ENCODE measurements at regions of chr7 and their contacts with region 1.

Region 1: GRCh38 chr7:138002096-138002827 is 376 bp upstream of the CREB3L2 start:
- DNase-seq: peak; percentile 95 to 98 (median 97)
- ATAC-seq: peak; percentile 95
- H3K4me3 ChIP-seq: peak overlapping the region; percentile 99
- H3K4me3 Mint-ChIP-seq: peak overlapping the region; percentile 89 to 96 (median 94)
- H3K27ac ChIP-seq: peak overlapping the region; percentile 79
- H3K27ac Mint-ChIP-seq: peak overlapping the region; percentile 67 to 95 (median 89)
- H3K4me1 ChIP-seq: peaks cover 6 to 14% of the 10 kb centered on the region in 2 donors
- H3K4me1 Mint-ChIP-seq: peaks cover 9 to 54% (median 45%) of the 10 kb centered on the region in 7 donors
- H3K27me3 ChIP-seq: no peaks in the 10 kb centered on the region
- H3K27me3 Mint-ChIP-seq: no peaks in the 10 kb centered on the region

Region 2: DNA sequence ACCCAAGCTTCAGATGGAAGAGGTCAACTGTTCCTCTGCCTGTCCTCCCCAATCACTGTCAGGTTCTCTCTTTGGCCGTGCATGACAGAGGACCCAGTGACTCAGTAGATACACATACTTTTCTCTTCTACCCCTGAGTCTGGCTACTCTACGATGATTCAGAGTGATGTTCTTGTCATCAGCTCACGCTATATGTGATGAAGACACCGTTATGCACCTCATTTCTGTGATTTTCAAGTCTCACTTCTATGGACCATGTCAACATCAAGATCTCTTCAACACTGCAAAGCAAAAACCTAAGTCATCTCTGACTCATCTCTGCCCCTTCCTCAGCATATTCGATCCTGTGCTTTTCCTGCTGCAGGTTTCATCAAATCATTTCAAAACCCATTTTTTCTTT is 78.9 kb before region 1 on chr7:
- CTCF ChIA-PET with region 1: interaction called, 4 read pairs
- POLR2A ChIA-PET with region 1: interaction called, 3 read pairs
- intact Hi-C with region 1: loop called in 1 of 2 experiments (anchors 5 kb)
- DNase-seq: no peak
- ATAC-seq: peak; percentile 18
- H3K4me3 ChIP-seq: no peak overlapping the region
- H3K4me3 Mint-ChIP-seq: no peak overlapping the region
- H3K27ac ChIP-seq: no peak overlapping the region
- H3K27ac Mint-ChIP-seq: peak overlapping the region in 1 of 9 donors; percentile 4
- H3K4me1 ChIP-seq: no peaks in the 10 kb centered on the region
- H3K4me1 Mint-ChIP-seq: peaks cover 13 to 35% (median 17%) of the 10 kb centered on the region in 7 donors
- H3K27me3 ChIP-seq: no peaks in the 10 kb centered on the region
- H3K27me3 Mint-ChIP-seq: no peaks in the 10 kb centered on the region

Region 3: GRCh38 chr7:137934941-137935883 is 67.0 kb before region 1 on chr7:
- CTCF ChIA-PET with region 1: interaction called, 13 read pairs
- POLR2A ChIA-PET with region 1: interaction called, 5 read pairs
- intact Hi-C with region 1: loop called (anchors 1 kb)
- DNase-seq: peak in 6 of 9 donors; percentile 12 to 52 (median 35)
- ATAC-seq: peak; percentile 80
- H3K4me3 ChIP-seq: peak overlapping the region; percentile 45
- H3K4me3 Mint-ChIP-seq: peak overlapping the region; percentile 68 to 92 (median 86)
- H3K27ac ChIP-seq: peak overlapping the region; percentile 70
- H3K27ac Mint-ChIP-seq: peak overlapping the region; percentile 89 to 99 (median 96)
- H3K4me1 ChIP-seq: peaks cover 12 to 20% of the 10 kb centered on the region in 2 donors
- H3K4me1 Mint-ChIP-seq: peaks cover 31 to 50% (median 42%) of the 10 kb centered on the region in 7 donors
- H3K27me3 ChIP-seq: no peaks in the 10 kb centered on the region
- H3K27me3 Mint-ChIP-seq: no peaks in the 10 kb centered on the region

Region 4: GRCh38 chr7:137943147-137943551 is 59.1 kb before region 1 on chr7:
- CTCF ChIA-PET with region 1: interaction called, 12 read pairs
- POLR2A ChIA-PET with region 1: no interaction called
- intact Hi-C with region 1: no loop called
- DNase-seq: no peak
- ATAC-seq: no peak
- H3K4me3 ChIP-seq: no peak overlapping the region
- H3K4me3 Mint-ChIP-seq: no peak overlapping the region
- H3K27ac ChIP-seq: no peak overlapping the region
- H3K27ac Mint-ChIP-seq: no peak overlapping the region
- H3K4me1 ChIP-seq: no peaks in the 10 kb centered on the region
- H3K4me1 Mint-ChIP-seq: peaks cover 0 to 21% (median 3%) of the 10 kb centered on the region in 7 donors
- H3K27me3 ChIP-seq: no peaks in the 10 kb centered on the region
- H3K27me3 Mint-ChIP-seq: no peaks in the 10 kb centered on the region

Region 5: GRCh38 chr7:138161600-138162081 is 159.4 kb after region 1 on chr7:
- CTCF ChIA-PET with region 1: interaction called, 3 read pairs
- POLR2A ChIA-PET with region 1: no interaction called
- intact Hi-C with region 1: loop called in 1 of 2 experiments (anchors 2 kb)
- DNase-seq: peak; percentile 24 to 87 (median 79)
- ATAC-seq: peak; percentile 99
- H3K4me3 ChIP-seq: no peak overlapping the region
- H3K4me3 Mint-ChIP-seq: no peak overlapping the region
- H3K27ac ChIP-seq: no peak overlapping the region
- H3K27ac Mint-ChIP-seq: no peak overlapping the region
- H3K4me1 ChIP-seq: no peaks in the 10 kb centered on the region
- H3K4me1 Mint-ChIP-seq: no peaks in the 10 kb centered on the region
- H3K27me3 ChIP-seq: no peaks in the 10 kb centered on the region
- H3K27me3 Mint-ChIP-seq: peaks cover 0 to 7% (median 0%) of the 10 kb centered on the region in 5 donors

Region 6: DNA sequence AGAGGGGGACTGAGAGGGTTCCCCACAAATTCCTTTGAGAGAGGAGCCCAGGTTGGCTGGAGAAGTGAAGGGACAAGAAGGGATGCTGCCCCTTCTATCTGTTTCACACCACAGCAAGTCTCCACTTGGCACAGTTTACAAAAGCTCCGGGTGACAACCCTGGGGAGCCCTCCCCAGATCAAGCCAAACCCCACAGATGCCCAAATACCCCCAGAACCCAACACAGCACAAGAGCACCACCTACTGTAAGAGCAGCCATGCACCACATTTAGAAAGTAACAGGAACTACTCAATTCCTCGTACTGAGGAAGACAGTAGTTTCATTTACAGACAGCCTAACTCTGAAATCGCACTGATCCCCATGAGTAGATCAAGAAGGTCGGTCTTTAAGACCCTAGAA is 863.6 kb after region 1 on chr7:
- CTCF ChIA-PET with region 1: no interaction called
- POLR2A ChIA-PET with region 1: no interaction called
- intact Hi-C with region 1: loop called in 1 of 2 experiments (anchors 2 kb)
- DNase-seq: peak in 8 of 9 donors; percentile 21 to 62 (median 49)
- ATAC-seq: peak; percentile 84
- H3K4me3 ChIP-seq: no peak overlapping the region
- H3K4me3 Mint-ChIP-seq: no peak overlapping the region
- H3K27ac ChIP-seq: no peak overlapping the region
- H3K27ac Mint-ChIP-seq: peak overlapping the region in 7 of 9 donors; percentile 0 to 69 (median 40)
- H3K4me1 ChIP-seq: no peaks in the 10 kb centered on the region
- H3K4me1 Mint-ChIP-seq: peaks cover 0 to 18% (median 7%) of the 10 kb centered on the region in 7 donors
- H3K27me3 ChIP-seq: no peaks in the 10 kb centered on the region
- H3K27me3 Mint-ChIP-seq: peaks cover 0 to 4% (median 2%) of the 10 kb centered on the region in 5 donors